ENCODE measurements at regions of chr16 and their contacts with region 1.

Region 1: DNA sequence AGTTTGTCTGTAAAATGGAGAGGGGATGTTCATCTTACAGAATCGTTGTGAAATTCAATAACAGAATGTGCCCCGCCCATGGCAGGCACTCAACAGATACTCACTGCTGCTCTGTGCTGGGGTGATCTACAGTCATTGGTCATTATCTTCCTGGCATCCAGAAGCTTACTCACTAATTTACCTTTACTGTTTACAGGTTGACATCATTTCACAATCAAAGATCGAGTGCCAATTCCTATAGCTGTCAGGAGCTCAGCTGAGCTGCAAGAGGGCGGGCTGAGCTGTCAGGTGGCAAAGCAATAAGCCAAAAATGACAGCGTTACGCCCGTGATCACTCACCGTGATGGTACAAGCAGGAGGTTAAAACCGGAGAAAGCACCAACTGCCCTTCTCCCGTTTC is 51.2 kb downstream of the LITAF start:
- DNase-seq: no peak
- ATAC-seq: no peak
- H3K4me3 ChIP-seq: no peak overlapping the region
- H3K4me3 Mint-ChIP-seq: no peak overlapping the region
- H3K27ac ChIP-seq: no peak overlapping the region
- H3K27ac Mint-ChIP-seq: no peak overlapping the region
- H3K4me1 ChIP-seq: no peaks in the 10 kb centered on the region
- H3K4me1 Mint-ChIP-seq: peaks cover 19% of the 10 kb centered on the region
- H3K27me3 ChIP-seq: no peaks in the 10 kb centered on the region
- H3K27me3 Mint-ChIP-seq: no peaks in the 10 kb centered on the region
- CTCF ChIP-seq: no peak

Region 2: GRCh38 chr16:11484691-11485258 is 50.7 kb before region 1 on chr16:
- CTCF ChIA-PET with region 1: no interaction called
- POLR2A ChIA-PET with region 1: no interaction called
- intact Hi-C with region 1: no loop called
- DNase-seq: no peak
- ATAC-seq: no peak
- H3K4me3 ChIP-seq: no peak overlapping the region
- H3K4me3 Mint-ChIP-seq: no peak overlapping the region
- H3K27ac ChIP-seq: no peak overlapping the region
- H3K27ac Mint-ChIP-seq: no peak overlapping the region
- H3K4me1 ChIP-seq: no peaks in the 10 kb centered on the region
- H3K4me1 Mint-ChIP-seq: no peaks in the 10 kb centered on the region
- H3K27me3 ChIP-seq: no peaks in the 10 kb centered on the region
- H3K27me3 Mint-ChIP-seq: no peaks in the 10 kb centered on the region
- CTCF ChIP-seq: no peak

Region 3: GRCh38 chr16:11515540-11516430 is 19.7 kb before region 1 on chr16:
- CTCF ChIA-PET with region 1: interaction called, 17 read pairs
- POLR2A ChIA-PET with region 1: interaction called, 3 read pairs
- intact Hi-C with region 1: no loop called
- DNase-seq: no peak
- ATAC-seq: no peak
- H3K4me3 ChIP-seq: no peak overlapping the region
- H3K4me3 Mint-ChIP-seq: no peak overlapping the region
- H3K27ac ChIP-seq: no peak overlapping the region
- H3K27ac Mint-ChIP-seq: no peak overlapping the region
- H3K4me1 ChIP-seq: no peaks in the 10 kb centered on the region
- H3K4me1 Mint-ChIP-seq: no peaks in the 10 kb centered on the region
- H3K27me3 ChIP-seq: no peaks in the 10 kb centered on the region
- H3K27me3 Mint-ChIP-seq: no peaks in the 10 kb centered on the region
- CTCF ChIP-seq: no peak

Region 4: GRCh38 chr16:11560701-11561449 is 25.4 kb after region 1 on chr16:
- CTCF ChIA-PET with region 1: interaction called, 26 read pairs
- POLR2A ChIA-PET with region 1: interaction called, 4 read pairs
- intact Hi-C with region 1: loop called in 1 of 2 experiments (anchors 2 kb)
- DNase-seq: peak; percentile 55 to 97 (median 76)
- ATAC-seq: peak; percentile 82
- H3K4me3 ChIP-seq: peak overlapping the region; percentile 42 to 56
- H3K4me3 Mint-ChIP-seq: peak overlapping the region; percentile 83
- H3K27ac ChIP-seq: peak overlapping the region; percentile 90 to 97
- H3K27ac Mint-ChIP-seq: peak overlapping the region; percentile 99
- H3K4me1 ChIP-seq: peaks cover 83% of the 10 kb centered on the region
- H3K4me1 Mint-ChIP-seq: peaks cover 84% of the 10 kb centered on the region
- H3K27me3 ChIP-seq: no peaks in the 10 kb centered on the region
- H3K27me3 Mint-ChIP-seq: no peaks in the 10 kb centered on the region
- CTCF ChIP-seq: no peak

Region 5: DNA sequence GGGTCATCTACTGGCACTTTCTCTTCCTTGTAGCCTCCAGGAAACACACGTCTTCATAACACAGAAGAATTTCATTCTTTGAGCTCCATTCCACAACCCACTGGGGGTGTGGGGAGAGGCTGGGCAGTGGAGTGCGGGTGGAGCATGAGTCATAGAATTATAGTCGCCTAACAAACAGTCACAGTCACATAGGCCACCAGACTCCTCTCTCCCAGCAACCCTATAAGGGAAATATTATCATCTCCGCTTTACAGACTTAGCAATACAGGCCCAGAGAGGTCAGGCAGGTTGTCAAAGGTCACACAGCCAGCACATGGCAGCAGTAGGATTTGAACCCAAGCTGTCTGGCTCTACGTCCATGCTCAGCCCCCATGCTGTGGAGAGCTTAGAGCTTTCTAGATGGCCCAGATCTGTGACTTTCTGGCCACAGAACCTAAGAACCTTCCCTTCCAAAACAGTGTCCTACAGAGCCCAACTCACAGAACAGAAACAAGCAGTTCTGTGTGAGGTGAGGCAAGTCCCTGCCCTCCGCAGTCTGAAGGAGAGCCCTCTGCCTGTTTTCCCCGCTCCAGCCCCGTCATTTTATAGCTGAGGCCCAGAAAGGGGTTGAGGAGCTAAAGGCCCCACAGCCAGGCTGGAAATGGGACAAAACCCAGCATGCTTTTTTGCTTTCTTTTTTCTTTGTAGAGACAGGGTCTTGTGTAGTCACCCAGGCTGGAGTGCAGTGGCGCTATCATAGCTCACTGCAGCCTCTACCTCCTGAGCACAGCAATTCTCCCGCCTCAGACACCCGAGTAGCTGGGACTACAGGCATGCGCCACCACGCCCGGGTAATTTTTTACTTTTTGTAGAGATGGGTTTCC is 62.0 kb after region 1 on chr16:
- CTCF ChIA-PET with region 1: interaction called, 16 read pairs
- POLR2A ChIA-PET with region 1: interaction called, 6 read pairs
- intact Hi-C with region 1: no loop called
- DNase-seq: peak in 3 of 9 experiments; percentile 42 to 44 (median 42)
- ATAC-seq: peak; percentile 70
- H3K4me3 ChIP-seq: no peak overlapping the region
- H3K4me3 Mint-ChIP-seq: no peak overlapping the region
- H3K27ac ChIP-seq: peak overlapping the region in 1 of 2 experiments; percentile 25
- H3K27ac Mint-ChIP-seq: peak overlapping the region; percentile 39
- H3K4me1 ChIP-seq: peaks cover 21% of the 10 kb centered on the region
- H3K4me1 Mint-ChIP-seq: peaks cover 32% of the 10 kb centered on the region
- H3K27me3 ChIP-seq: no peaks in the 10 kb centered on the region
- H3K27me3 Mint-ChIP-seq: no peaks in the 10 kb centered on the region
- CTCF ChIP-seq: no peak

Region 6: DNA sequence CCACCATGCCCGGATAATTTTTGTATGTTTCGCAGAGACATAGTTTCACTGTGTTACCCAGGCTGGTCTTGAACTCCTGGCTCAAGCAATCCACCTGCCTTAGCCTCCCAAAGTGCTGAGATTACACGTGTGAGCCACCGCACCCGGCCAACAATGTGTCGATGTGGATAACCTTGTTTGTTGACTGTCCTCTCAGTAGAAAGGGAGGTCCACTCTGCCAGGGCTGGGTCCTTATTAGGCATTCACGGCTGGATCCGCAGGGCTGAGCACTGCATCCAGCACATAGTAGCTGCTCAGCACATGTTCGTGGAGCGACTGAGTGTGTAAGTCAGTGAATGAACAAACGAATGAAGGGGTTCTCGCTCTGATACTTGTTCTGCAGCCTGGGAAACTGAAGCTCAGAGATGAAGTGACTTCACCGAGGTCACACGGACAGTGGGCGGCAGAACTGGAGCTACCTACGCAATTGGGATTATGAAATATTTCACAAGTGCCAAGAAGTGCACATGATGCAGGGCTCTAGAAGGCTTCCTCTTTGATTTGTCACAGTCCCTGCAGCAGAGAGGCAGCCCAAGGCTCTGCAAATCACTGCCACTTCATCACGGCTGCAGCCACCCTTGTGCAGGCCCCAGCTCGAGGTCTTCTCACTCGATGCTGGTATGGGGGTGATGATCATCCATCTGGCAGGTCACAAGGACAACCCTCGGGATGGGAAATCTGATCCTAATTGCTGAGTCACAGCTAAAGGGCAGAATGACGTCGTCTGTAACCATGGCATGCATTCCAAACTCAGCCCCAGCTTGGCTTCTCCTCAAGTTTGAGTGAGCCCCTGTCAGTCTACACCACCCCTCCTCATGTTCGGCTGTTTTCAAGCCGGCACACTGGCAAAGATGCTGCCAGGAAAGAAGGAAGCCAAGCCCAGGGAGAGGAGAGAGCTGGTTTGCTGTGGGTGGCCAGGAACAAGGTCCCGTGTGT is 104.7 kb after region 1 on chr16:
- CTCF ChIA-PET with region 1: interaction called, 178 read pairs
- POLR2A ChIA-PET with region 1: interaction called, 6 read pairs
- intact Hi-C with region 1: loop called (anchors 1 kb)
- DNase-seq: peak in 3 of 9 experiments; percentile 20 to 60 (median 57)
- ATAC-seq: no peak
- H3K4me3 ChIP-seq: no peak overlapping the region
- H3K4me3 Mint-ChIP-seq: no peak overlapping the region
- H3K27ac ChIP-seq: no peak overlapping the region
- H3K27ac Mint-ChIP-seq: peak overlapping the region; percentile 27
- H3K4me1 ChIP-seq: peaks cover 10% of the 10 kb centered on the region
- H3K4me1 Mint-ChIP-seq: peaks cover 24% of the 10 kb centered on the region
- H3K27me3 ChIP-seq: no peaks in the 10 kb centered on the region
- H3K27me3 Mint-ChIP-seq: no peaks in the 10 kb centered on the region
- CTCF ChIP-seq: no peak

Region 7: GRCh38 chr16:11715246-11715947 is 179.9 kb after region 1 on chr16:
- CTCF ChIA-PET with region 1: interaction called, 127 read pairs
- POLR2A ChIA-PET with region 1: interaction called, 3 read pairs
- intact Hi-C with region 1: loop called (anchors 1 kb)
- DNase-seq: no peak
- ATAC-seq: no peak
- H3K4me3 ChIP-seq: no peak overlapping the region
- H3K4me3 Mint-ChIP-seq: no peak overlapping the region
- H3K27ac ChIP-seq: no peak overlapping the region
- H3K27ac Mint-ChIP-seq: no peak overlapping the region
- H3K4me1 ChIP-seq: no peaks in the 10 kb centered on the region
- H3K4me1 Mint-ChIP-seq: peaks cover 25% of the 10 kb centered on the region
- H3K27me3 ChIP-seq: no peaks in the 10 kb centered on the region
- H3K27me3 Mint-ChIP-seq: no peaks in the 10 kb centered on the region
- CTCF ChIP-seq: no peak